AG04449 (cell line): ENCODE measurements at regions of chr2 and their contacts with region 1.

Region 1: DNA sequence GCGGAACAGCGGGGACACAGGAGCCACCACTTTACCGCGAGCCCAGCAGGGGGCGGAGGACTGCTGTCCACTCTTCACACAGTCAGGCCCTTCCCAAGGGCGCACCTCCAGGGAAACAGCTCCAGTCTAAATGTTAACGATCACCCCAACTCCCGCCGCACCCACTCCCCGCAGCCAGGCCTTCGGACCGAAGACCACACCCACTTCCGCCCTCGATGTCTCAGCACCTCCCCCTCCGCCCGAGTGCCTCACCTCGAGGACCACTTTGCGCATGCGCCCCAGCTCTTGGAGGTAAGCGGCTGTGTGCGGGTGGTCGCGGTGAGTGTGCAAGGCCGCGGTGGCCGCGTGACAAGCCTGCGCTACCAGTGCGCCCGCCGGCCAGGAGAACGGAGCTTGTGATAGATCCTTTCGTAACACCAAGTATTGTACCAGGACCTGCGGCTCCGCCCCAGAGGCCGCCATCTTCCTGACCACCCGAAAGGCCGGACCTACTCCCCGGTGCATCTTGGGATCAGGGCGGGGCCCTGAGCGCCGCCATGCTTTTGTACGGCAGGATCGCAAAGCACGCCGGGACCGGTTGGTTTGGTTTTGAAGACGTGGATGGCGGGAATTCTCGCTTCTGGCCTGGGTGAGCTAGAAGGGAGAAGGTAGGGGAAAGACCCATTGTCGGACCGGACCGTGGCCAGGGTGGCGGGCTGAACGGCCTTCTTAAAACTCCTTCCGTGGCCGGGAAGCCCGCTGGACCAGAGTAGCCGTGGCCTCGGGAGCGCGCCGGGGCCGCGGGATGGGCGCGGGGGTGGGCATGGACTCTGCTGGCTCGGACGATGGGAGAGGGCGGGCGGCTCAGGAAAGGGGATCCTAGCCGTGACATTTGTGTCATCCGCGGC is at the starts of genes CENPO and PTRHD1:
- DNase-seq: peak; percentile 77
- H3K4me3 ChIP-seq: peak within 1 kb of the TSS; percentile 94
- CTCF ChIP-seq: peak; percentile 76

Region 2: GRCh38 chr2:24473626-24474025 is 319.5 kb before region 1 on chr2:
- CTCF ChIA-PET with region 1: no interaction called
- POLR2A ChIA-PET with region 1: no interaction called
- DNase-seq: no peak
- H3K4me3 ChIP-seq: no peak overlapping the region
- CTCF ChIP-seq: no peak

Region 3: GRCh38 chr2:24766609-24767008 is 26.5 kb before region 1 on chr2:
- CTCF ChIA-PET with region 1: interaction called, 20 read pairs
- POLR2A ChIA-PET with region 1: no interaction called
- DNase-seq: no peak
- H3K4me3 ChIP-seq: no peak overlapping the region
- CTCF ChIP-seq: no peak

Region 4: GRCh38 chr2:24779116-24779515 is 14.0 kb before region 1 on chr2:
- CTCF ChIA-PET with region 1: interaction called, 60 read pairs
- POLR2A ChIA-PET with region 1: no interaction called
- DNase-seq: no peak
- H3K4me3 ChIP-seq: no peak overlapping the region
- CTCF ChIP-seq: no peak

Region 5: GRCh38 chr2:24816884-24817283 is 23.8 kb after region 1 on chr2:
- CTCF ChIA-PET with region 1: interaction called, 15 read pairs
- POLR2A ChIA-PET with region 1: no interaction called
- DNase-seq: peak; percentile 67
- H3K4me3 ChIP-seq: no peak overlapping the region
- CTCF ChIP-seq: no peak

Region 6: DNA sequence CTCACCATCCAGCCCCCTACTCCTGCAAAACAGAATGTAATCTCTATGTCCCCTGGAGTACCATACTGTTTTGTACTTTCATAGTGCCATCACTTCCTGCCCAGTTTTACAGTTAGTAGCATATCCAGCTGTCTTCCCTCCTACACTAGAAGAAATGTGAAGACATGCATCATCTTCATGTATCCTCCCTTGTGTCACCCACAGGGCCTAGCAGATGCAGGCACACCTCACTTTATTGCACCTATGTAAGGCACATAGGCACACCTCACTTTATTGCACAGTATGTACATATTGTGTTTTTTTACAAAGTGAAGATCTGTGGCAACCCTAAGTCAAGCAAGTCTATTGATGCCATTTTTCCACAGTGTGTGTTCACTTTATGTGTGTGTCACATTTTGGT is 166.6 kb after region 1 on chr2:
- CTCF ChIA-PET with region 1: no interaction called
- POLR2A ChIA-PET with region 1: no interaction called
- DNase-seq: no peak
- H3K4me3 ChIP-seq: no peak overlapping the region
- CTCF ChIP-seq: no peak